ENCODE measurements at regions of chr5 and their contacts with region 1.

Region 1: GRCh38 chr5:157278319-157279037 is 12.6 kb downstream of the CYFIP2 start:
- DNase-seq: no peak
- ATAC-seq: no peak
- H3K4me3 ChIP-seq: no peak overlapping the region
- H3K27ac ChIP-seq: no peak overlapping the region
- H3K4me1 ChIP-seq: no peaks in the 10 kb centered on the region
- CTCF ChIP-seq: no peak
- EP300 ChIP-seq: no peak
- POLR2A ChIP-seq: no peak
- RAD21 ChIP-seq: no peak

Region 2: GRCh38 chr5:157265714-157266285 is 12.7 kb before region 1 on chr5 and contains the start of gene CYFIP2:
- CTCF ChIA-PET with region 1: interaction called, 16 read pairs
- POLR2A ChIA-PET with region 1: no interaction called
- DNase-seq: peak; percentile 19 to 71
- ATAC-seq: peak; percentile 95 to 96
- H3K4me3 ChIP-seq: peak within 1 kb of the TSS; percentile 90
- H3K27ac ChIP-seq: peak within 1 kb of the TSS; percentile 75 to 92
- H3K4me1 ChIP-seq: peaks cover 25% of the 10 kb centered on the region
- CTCF ChIP-seq: no peak
- EP300 ChIP-seq: no peak
- POLR2A ChIP-seq: no peak
- RAD21 ChIP-seq: no peak
- polyA plus RNA-seq, gene CYFIP2: 9.0 and 25.4 TPM in 2 replicates